OCI-LY7 (cell line): ENCODE measurements at regions of chr11 and their contacts with region 1.

Region 1: GRCh38 chr11:65859200-65859811 is 927 bp upstream of the MUS81 start:
- DNase-seq: peak; percentile 99
- H3K4me3 ChIP-seq: peak overlapping the region; percentile 99
- H3K27ac ChIP-seq: peak overlapping the region; percentile 93
- H3K4me1 ChIP-seq: peaks cover 31% of the 10 kb centered on the region
- CTCF ChIP-seq: 0 out of 2 replicates have a peak, but pooled peaks have one; percentile 26

Region 2: DNA sequence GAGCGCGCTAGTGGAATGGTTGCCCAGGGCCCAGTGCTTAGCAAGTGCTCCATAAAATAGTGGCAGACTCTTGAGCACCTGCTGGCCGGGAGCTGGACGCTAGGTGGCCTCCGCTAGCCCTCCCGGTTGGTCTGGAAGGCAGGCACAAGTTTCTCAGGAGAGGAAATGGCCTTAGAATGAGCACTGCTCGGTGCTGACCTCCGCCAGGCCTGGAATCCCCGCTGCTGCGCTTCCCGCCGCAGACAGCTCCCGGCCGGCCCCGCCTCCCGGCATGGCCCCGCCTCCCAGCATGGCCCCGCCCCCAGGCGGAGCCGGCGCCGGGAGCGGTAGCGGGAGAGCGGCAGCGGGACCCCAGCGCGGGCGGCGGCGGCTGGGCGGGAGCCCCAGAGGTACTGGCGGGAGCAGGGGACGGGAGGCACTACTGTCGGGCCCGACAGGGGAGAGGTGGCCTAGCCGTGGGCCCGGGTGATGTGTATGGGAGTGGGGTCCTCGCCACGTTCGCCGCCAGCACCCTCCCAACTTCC is 221.4 kb before region 1 on chr11 and contains the start of gene SIPA1:
- CTCF ChIA-PET with region 1: no interaction called
- POLR2A ChIA-PET with region 1: no interaction called
- intact Hi-C with region 1: loop called (anchors 2 kb)
- DNase-seq: peak; percentile 75
- H3K4me3 ChIP-seq: peak within 1 kb of the TSS; percentile 90
- H3K27ac ChIP-seq: peak within 1 kb of the TSS; percentile 95
- H3K4me1 ChIP-seq: peaks cover 51% of the 10 kb centered on the region
- CTCF ChIP-seq: no peak
- total RNA-seq, gene SIPA1: 57.6 and 95.4 TPM in 2 replicates

Region 3: GRCh38 chr11:65711785-65712632 is 147.3 kb before region 1 on chr11 and contains the start of gene KAT5:
- CTCF ChIA-PET with region 1: no interaction called
- POLR2A ChIA-PET with region 1: no interaction called
- intact Hi-C with region 1: loop called (anchors 1 kb)
- DNase-seq: peak; percentile 99
- H3K4me3 ChIP-seq: peak within 1 kb of the TSS; percentile 89
- H3K27ac ChIP-seq: peak within 1 kb of the TSS; percentile 82
- H3K4me1 ChIP-seq: peaks cover 19% of the 10 kb centered on the region
- CTCF ChIP-seq: peak; percentile 86
- total RNA-seq, gene KAT5: 87.9 and 97.1 TPM in 2 replicates

Region 4: DNA sequence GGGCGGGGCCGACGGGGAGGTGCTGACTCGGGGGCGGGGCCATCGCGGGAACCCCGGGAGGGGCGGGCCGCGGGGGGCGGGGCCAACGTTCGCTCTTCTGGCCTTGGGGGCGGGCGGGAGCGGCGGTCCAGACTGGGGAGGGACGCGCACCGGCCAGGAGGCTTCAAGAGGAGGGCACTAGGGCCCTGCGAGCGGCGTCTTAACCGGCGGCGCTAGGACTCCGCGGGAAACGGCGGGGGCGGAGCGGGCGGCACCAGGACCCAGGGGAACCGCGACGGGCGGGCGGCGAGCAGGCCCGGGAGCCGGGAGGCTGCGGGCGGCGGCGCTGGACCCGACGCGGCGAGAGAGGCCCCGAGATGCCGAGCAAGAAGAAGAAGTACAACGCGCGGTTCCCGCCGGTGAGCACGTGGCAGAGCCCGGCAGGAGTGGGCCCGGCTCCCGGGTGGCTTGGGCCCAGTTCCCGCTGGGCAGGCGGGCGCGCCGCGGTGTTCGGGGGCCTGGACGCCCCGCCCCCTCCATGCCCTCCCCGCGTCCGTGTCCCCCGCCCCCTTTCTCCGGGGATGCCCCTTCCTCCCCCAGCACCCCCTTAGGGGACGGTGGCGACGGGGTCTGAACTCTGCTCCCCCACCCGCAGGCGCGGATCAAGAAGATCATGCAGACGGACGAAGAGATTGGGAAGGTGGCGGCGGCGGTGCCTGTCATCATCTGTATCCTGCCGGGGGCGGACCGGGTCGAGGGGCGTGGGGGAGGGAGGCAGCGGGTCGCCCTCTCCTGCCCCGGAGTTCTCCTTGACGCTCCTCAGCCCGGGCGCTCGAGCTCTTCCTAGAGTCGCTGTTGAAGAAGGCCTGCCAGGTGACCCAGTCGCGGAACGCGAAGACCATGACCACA is 60.1 kb after region 1 on chr11 and contains the start of gene DRAP1:
- CTCF ChIA-PET with region 1: no interaction called
- POLR2A ChIA-PET with region 1: no interaction called
- intact Hi-C with region 1: loop called (anchors 2 kb)
- DNase-seq: peak; percentile 99
- H3K4me3 ChIP-seq: peak within 1 kb of the TSS; percentile 85
- H3K27ac ChIP-seq: peak within 1 kb of the TSS; percentile 54
- H3K4me1 ChIP-seq: peaks cover 22% of the 10 kb centered on the region
- CTCF ChIP-seq: no peak
- total RNA-seq, gene DRAP1: 93.2 and 110 TPM in 2 replicates

Region 5: GRCh38 chr11:65988791-65989592 is 129.7 kb after region 1 on chr11:
- CTCF ChIA-PET with region 1: no interaction called
- POLR2A ChIA-PET with region 1: interaction called, 4 read pairs
- intact Hi-C with region 1: loop called (anchors 1 kb)
- DNase-seq: peak; percentile 94
- H3K4me3 ChIP-seq: no peak overlapping the region
- H3K27ac ChIP-seq: no peak overlapping the region
- H3K4me1 ChIP-seq: no peaks in the 10 kb centered on the region
- CTCF ChIP-seq: peak; percentile 100

Region 6: DNA sequence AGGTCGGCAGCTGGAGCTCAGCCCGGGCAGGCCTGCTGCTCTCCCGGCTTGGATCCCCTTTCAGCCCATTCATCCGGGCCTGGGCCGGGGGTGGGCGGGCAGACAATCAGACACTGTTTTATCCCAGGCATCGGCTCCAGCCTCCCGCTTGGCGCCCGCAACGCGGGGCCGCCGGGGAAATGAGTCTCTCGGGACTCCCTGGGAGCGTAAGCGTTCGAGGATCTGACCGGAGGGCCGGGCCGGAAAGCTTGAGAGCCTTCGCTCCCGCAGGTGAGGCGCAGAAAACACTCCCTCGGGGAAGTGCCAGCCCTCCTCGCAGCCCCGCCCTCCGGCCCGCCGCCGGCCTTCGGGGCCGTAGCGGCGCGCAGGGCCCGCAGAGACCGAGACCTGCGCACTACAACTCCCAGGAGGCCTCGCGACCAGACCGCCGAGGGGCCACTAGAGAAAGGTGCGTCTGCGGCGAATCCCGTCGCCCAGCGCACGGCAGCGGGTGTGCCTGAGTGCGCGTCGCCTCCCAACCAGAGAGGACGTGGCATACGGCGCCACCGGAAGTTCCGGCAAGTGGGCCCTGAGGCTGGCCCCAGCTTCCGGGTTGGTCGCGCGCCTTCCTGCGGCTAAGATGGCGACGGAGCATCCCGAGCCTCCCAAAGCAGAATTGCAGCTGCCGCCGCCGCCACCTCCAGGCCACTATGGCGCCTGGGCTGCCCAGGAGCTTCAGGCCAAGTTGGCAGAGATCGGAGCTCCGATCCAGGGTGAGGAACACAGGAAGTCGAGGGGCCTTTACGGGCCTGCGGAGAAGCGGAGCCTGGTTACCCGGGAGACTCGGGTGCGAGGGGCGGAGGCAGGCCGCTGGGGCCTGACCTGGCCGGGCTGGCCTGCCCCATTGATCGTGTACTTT is 192.7 kb after region 1 on chr11 and contains the start of gene SF3B2:
- CTCF ChIA-PET with region 1: no interaction called
- POLR2A ChIA-PET with region 1: interaction called, 3 read pairs
- intact Hi-C with region 1: loop called (anchors 1 kb)
- DNase-seq: peak; percentile 99
- H3K4me3 ChIP-seq: peak within 1 kb of the TSS; percentile 83
- H3K27ac ChIP-seq: peak within 1 kb of the TSS; percentile 60
- H3K4me1 ChIP-seq: peaks cover 21% of the 10 kb centered on the region
- CTCF ChIP-seq: no peak
- total RNA-seq, gene SF3B2: 185 and 191 TPM in 2 replicates